Vagina (tissue), 2 donors: ENCODE measurements at regions of chr4 and their contacts with region 1.

Region 1: DNA sequence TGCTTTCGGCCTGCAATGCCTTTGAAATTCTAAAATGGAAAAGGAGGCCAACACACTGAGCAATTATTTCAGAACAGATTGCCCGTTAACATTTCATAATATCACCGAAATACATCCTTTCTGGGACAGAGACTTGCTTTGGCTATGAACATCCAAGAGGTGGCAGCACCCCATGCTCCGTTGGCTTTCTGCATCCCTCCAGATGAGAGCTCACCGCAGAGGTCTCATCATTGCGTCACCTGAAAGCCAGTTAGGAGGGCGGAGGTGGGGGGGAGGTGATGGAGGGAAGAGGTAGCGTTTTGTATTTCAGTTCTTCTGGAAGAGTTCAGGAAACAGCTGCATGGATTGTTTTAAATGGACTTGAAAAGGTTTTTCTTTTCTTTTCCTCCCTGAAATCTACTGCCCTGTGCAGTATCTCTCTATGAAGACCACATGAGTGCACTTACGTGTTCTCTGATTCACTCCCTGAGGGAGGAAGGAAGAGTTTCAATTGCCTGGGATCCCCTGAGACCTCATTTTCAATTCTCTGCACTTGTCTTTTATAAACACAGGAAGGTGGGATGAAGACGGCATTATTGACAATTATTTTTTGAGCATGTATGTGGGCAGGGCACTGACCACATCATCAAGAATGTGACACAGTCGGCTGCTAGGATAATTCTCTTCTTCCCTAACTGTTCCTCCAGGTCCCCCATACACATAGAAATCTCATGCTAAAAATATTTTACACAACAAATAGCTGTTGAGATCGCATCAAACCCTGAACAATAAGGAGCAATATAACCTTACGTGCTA is 166.9 kb upstream of the PGRMC2 start:
- DNase-seq: peak in 1 of 2 donors; percentile 96
- H3K4me3 ChIP-seq: no peak overlapping the region
- H3K27ac ChIP-seq: peak overlapping the region; percentile 9
- H3K4me1 ChIP-seq: peaks cover 10% of the 10 kb centered on the region
- H3K27me3 ChIP-seq: no peaks in the 10 kb centered on the region
- CTCF ChIP-seq: peak; percentile 45 to 67 (median 58)
- POLR2A ChIP-seq: no peak

Region 2: DNA sequence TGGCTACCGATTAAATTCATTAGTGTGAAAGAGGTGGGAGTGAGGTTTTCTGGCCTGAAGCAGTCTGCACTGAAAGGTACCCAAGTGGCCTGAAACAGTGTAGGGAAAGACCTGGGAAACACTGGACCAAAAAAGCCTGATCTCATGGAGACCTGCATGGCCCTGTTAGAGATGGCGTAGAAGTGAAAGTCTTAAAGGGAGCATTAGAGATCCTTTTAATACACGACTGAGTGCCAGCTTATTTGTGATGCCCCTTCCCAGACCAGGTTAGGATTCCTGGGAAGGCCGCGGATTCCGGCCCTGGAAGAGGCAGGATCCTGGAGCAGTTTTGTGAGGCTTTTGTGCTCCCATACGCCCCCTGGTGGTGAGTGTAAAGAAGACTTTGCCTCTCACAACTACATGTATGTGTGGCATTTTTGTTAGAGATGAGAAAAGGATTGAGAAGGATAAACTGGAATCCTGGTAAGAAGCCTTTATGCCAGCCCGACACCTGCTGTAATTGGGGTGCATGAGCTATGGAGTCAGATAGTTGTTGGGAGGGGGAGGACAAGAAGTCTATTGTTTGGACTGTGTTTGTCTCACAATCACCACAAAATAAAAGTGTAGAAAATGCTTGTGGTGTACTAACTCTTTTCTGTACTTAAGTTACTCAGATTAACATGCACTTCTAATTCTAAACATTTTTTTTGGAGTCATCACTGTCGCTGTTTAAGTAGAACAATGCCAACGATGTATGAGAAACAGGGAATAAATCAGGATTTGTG is 409.0 kb after region 1 on chr4:
- intact Hi-C with region 1: loop called (anchors 10 kb)
- DNase-seq: no peak
- H3K4me3 ChIP-seq: no peak overlapping the region
- H3K27ac ChIP-seq: no peak overlapping the region
- H3K4me1 ChIP-seq: peaks cover 30% of the 10 kb centered on the region
- H3K27me3 ChIP-seq: no peaks in the 10 kb centered on the region
- CTCF ChIP-seq: peak; percentile 80 to 86 (median 80)
- POLR2A ChIP-seq: no peak